CD8-positive, alpha-beta T cell (primary cell): ENCODE measurements at regions of chr6 and their contacts with region 1.

Region 1: DNA sequence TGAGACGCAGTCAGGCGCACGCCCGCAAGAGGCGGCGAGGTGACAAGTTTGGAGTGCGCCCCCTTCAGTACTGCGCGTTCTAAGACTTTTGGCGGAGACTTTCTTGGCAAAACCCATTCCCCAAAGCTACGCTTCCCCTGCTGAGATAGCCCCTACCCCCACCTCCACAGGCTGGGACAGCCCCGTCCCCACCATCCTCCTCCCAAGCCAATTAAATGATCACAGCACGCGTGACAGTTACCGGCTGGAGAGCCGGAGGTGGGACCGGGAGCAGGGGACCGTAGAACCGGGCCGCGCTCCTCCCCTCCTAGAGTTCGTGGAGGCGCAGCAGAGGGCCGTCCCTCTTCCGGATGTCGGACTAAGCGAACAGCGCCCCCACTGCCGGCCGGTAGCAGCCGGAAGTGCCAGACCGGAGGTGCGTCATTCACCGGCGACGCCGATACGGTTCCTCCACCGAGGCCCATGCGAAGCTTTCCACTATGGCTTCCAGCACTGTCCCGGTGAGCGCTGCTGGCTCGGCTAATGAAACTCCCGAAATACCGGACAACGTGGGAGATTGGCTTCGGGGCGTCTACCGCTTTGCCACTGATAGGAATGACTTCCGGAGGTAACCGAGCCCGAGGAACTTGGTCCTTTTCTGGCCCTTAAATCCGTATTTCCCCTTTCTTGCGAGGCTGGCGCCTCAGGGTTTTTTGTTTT is at the start of gene TOMM6:
- DNase-seq: peak; percentile 90 to 97 (median 96)
- ATAC-seq: peak; percentile 78
- H3K4me3 ChIP-seq: peak within 1 kb of the TSS; percentile 80 to 96
- H3K4me3 Mint-ChIP-seq: peak within 1 kb of the TSS; percentile 97
- H3K27ac ChIP-seq: peak within 1 kb of the TSS; percentile 89 to 94
- H3K27ac Mint-ChIP-seq: peak within 1 kb of the TSS; percentile 99
- H3K4me1 ChIP-seq: peaks cover 6% of the 10 kb centered on the region
- H3K4me1 Mint-ChIP-seq: peaks cover 15% of the 10 kb centered on the region
- H3K27me3 ChIP-seq: no peaks in the 10 kb centered on the region
- H3K27me3 Mint-ChIP-seq: no peaks in the 10 kb centered on the region
- CTCF ChIP-seq: peak; percentile 78
- total RNA-seq, gene TOMM6: 94.3 to 101 TPM

Region 2: GRCh38 chr6:41408576-41408975 is 378.8 kb before region 1 on chr6:
- CTCF ChIA-PET with region 1: no interaction called
- POLR2A ChIA-PET with region 1: no interaction called
- intact Hi-C with region 1: no loop called
- DNase-seq: no peak
- ATAC-seq: no peak
- H3K4me3 ChIP-seq: no peak overlapping the region
- H3K4me3 Mint-ChIP-seq: no peak overlapping the region
- H3K27ac ChIP-seq: no peak overlapping the region
- H3K27ac Mint-ChIP-seq: no peak overlapping the region
- H3K4me1 ChIP-seq: no peaks in the 10 kb centered on the region
- H3K4me1 Mint-ChIP-seq: no peaks in the 10 kb centered on the region
- H3K27me3 ChIP-seq: no peaks in the 10 kb centered on the region
- H3K27me3 Mint-ChIP-seq: peaks cover 7% of the 10 kb centered on the region
- CTCF ChIP-seq: no peak

Region 3: DNA sequence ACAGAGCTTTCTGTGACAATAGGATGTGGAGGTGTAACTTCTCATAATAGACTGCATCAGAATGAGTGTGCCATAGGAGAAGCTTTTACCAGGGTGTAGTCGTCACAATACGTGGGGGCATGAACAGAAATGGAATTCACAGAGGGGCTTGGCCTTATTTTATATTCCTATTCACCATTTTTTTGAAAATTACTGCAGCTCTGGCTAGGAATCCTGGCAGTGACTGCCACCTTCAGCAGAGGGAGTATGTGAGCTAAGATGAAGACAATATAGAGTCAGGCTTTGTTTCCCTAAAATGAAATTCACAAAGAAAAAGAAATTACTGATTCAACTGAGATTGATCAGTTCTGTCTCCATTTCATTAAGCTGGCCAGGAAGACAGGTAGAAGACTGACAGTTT is 14.0 kb after region 1 on chr6:
- CTCF ChIA-PET with region 1: interaction called, 11 read pairs
- POLR2A ChIA-PET with region 1: interaction called, 3 read pairs
- intact Hi-C with region 1: no loop called
- DNase-seq: no peak
- ATAC-seq: no peak
- H3K4me3 ChIP-seq: no peak overlapping the region
- H3K4me3 Mint-ChIP-seq: no peak overlapping the region
- H3K27ac ChIP-seq: no peak overlapping the region
- H3K27ac Mint-ChIP-seq: no peak overlapping the region
- H3K4me1 ChIP-seq: no peaks in the 10 kb centered on the region
- H3K4me1 Mint-ChIP-seq: no peaks in the 10 kb centered on the region
- H3K27me3 ChIP-seq: no peaks in the 10 kb centered on the region
- H3K27me3 Mint-ChIP-seq: no peaks in the 10 kb centered on the region
- CTCF ChIP-seq: no peak

Region 4: DNA sequence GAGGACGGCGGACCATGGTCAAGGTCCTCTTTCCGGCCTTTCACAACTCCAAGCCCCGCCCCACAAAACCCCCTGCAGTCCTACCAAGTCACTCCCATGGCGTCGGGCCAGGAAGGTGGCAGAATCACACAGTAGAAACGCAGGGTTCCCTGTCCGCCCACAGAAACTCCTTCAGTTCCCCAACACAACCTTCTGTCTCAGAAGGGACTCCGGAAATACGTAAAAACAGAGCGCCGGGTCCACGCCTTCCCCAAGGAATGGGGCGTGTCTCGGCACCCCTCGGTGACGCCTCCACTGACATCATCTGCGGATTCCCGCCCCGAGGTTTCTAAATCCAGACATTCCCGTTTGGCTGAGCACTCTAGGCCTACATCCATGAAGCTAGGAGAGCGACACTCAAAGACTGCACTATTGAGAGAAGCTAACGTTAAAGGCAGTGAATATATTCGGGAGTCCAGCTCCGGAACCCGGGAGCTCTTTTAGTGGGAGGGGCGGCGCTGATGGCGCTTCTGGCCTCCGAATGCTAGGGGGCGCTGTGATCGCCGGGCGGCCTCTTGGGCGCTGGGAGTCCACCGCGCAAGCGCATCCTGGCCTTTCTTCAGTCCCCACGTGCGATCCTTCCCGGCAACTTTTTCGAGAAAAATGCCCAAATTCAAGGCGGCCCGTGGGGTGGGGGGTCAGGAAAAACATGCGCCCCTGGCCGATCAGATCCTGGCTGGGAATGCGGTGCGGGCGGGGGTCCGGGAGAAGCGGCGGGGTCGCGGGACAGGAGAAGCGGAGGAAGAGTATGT is 133.7 kb after region 1 on chr6 and contains the starts of genes BYSL and MED20:
- CTCF ChIA-PET with region 1: interaction called, 30 read pairs
- POLR2A ChIA-PET with region 1: interaction called, 18 read pairs
- intact Hi-C with region 1: loop called (anchors 1 kb)
- DNase-seq: peak; percentile 86 to 98 (median 94)
- ATAC-seq: peak; percentile 92
- H3K4me3 ChIP-seq: peak within 1 kb of the TSS; percentile 96 to 97
- H3K4me3 Mint-ChIP-seq: peak within 1 kb of the TSS; percentile 100
- H3K27ac ChIP-seq: peak within 1 kb of the TSS; percentile 83 to 99
- H3K27ac Mint-ChIP-seq: peak within 1 kb of the TSS; percentile 100
- H3K4me1 ChIP-seq: peaks cover 32% of the 10 kb centered on the region
- H3K4me1 Mint-ChIP-seq: peaks cover 53% of the 10 kb centered on the region
- H3K27me3 ChIP-seq: no peaks in the 10 kb centered on the region
- H3K27me3 Mint-ChIP-seq: no peaks in the 10 kb centered on the region
- CTCF ChIP-seq: peak; percentile 97
- total RNA-seq, gene BYSL: 3.2 to 6.2 TPM
- total RNA-seq, gene MED20: 1.8 TPM

Region 5: DNA sequence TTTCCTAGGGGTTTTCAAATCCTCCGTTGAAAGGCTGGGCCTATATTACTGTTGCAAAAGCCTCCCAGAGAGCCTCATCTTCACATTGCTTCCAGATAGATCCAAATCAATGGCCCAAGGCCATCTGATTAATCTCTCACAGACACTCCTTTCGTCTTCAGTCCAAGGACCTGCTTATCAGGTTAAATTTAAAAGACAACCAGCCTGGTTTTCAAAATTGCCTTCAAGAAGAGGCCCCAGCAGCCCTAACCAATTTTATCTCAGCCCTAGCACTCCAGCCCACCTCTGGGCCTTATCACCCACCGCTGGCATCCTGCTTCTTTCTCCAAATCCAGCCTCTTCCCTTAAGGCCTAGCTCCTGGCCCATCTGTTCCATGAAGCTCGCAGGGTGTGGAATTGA is 169.7 kb after region 1 on chr6:
- CTCF ChIA-PET with region 1: no interaction called
- POLR2A ChIA-PET with region 1: no interaction called
- intact Hi-C with region 1: no loop called
- DNase-seq: no peak
- ATAC-seq: no peak
- H3K4me3 ChIP-seq: no peak overlapping the region
- H3K4me3 Mint-ChIP-seq: no peak overlapping the region
- H3K27ac ChIP-seq: peak overlapping the region in 1 of 2 experiments; percentile 2
- H3K27ac Mint-ChIP-seq: peak overlapping the region; percentile 83
- H3K4me1 ChIP-seq: peaks cover 38% of the 10 kb centered on the region
- H3K4me1 Mint-ChIP-seq: peaks cover 71% of the 10 kb centered on the region
- H3K27me3 ChIP-seq: no peaks in the 10 kb centered on the region
- H3K27me3 Mint-ChIP-seq: no peaks in the 10 kb centered on the region
- CTCF ChIP-seq: no peak

Region 6: DNA sequence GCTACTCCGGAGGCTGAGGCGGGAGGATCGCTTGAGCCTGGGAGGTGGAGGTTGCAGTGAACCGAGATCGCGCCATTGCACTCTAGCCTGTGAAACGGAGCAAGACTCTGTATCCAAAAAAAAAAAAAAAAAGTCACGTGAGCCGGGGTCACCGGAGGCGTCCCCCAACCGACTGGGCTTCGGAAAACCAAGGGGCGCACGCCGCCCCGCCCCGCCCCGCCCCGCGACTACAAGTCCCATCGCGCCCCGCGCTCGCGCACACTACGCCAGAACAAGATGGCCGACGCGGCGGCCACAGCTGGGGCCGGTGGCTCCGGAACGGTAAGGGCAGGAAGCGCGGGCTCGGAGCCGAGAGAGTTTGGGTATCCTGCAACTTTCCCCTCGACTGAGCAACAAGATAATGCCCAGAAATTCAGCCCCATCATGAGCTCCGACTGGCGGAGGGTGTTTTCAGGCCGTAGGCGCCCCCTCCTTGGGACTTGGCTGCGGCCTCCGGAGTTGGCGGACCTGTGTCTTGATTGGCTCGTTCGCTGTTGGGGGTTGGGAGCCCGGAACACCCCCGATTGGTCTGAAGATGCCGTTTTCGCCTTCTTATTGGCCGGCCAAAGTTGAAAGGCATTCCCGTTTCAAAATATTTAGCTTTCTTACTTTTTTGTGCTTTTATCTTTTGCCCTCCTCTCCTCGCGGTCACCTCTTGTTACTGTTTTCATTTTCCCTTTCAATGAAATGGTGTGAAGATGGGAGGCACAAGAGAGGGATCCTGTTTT is 263.1 kb after region 1 on chr6 and contains the start of gene TAF8:
- CTCF ChIA-PET with region 1: interaction called, 153 read pairs
- POLR2A ChIA-PET with region 1: interaction called, 48 read pairs
- intact Hi-C with region 1: loop called (anchors 1 kb)
- DNase-seq: peak; percentile 72 to 94 (median 89)
- ATAC-seq: peak; percentile 57
- H3K4me3 ChIP-seq: peak within 1 kb of the TSS; percentile 98 to 99
- H3K4me3 Mint-ChIP-seq: peak within 1 kb of the TSS; percentile 95
- H3K27ac ChIP-seq: peak within 1 kb of the TSS; percentile 80 to 89
- H3K27ac Mint-ChIP-seq: peak within 1 kb of the TSS; percentile 97
- H3K4me1 ChIP-seq: peaks cover 39% of the 10 kb centered on the region
- H3K4me1 Mint-ChIP-seq: peaks cover 66% of the 10 kb centered on the region
- H3K27me3 ChIP-seq: no peaks in the 10 kb centered on the region
- H3K27me3 Mint-ChIP-seq: no peaks in the 10 kb centered on the region
- CTCF ChIP-seq: no peak
- total RNA-seq, gene TAF8: 24.6 to 33.3 TPM

Region 7: GRCh38 chr6:42879372-42880239 is 1092.2 kb after region 1 on chr6 and contains the start of gene RPL7L1:
- CTCF ChIA-PET with region 1: no interaction called
- POLR2A ChIA-PET with region 1: no interaction called
- intact Hi-C with region 1: loop called in 1 of 2 experiments (anchors 5 kb)
- DNase-seq: peak; percentile 69 to 93 (median 82)
- ATAC-seq: peak; percentile 92
- H3K4me3 ChIP-seq: peak within 1 kb of the TSS; percentile 71 to 83
- H3K4me3 Mint-ChIP-seq: peak within 1 kb of the TSS; percentile 98
- H3K27ac ChIP-seq: peak within 1 kb of the TSS; percentile 92 to 94
- H3K27ac Mint-ChIP-seq: peak within 1 kb of the TSS; percentile 99
- H3K4me1 ChIP-seq: peaks cover 19% of the 10 kb centered on the region
- H3K4me1 Mint-ChIP-seq: peaks cover 27% of the 10 kb centered on the region
- H3K27me3 ChIP-seq: no peaks in the 10 kb centered on the region
- H3K27me3 Mint-ChIP-seq: no peaks in the 10 kb centered on the region
- CTCF ChIP-seq: no peak
- total RNA-seq, gene RPL7L1: 67.9 to 68.6 TPM

Region 8: GRCh38 chr6:43427406-43428111 is 1640.2 kb after region 1 on chr6 and contains the start of gene ABCC10:
- CTCF ChIA-PET with region 1: no interaction called
- POLR2A ChIA-PET with region 1: no interaction called
- intact Hi-C with region 1: loop called in 1 of 2 experiments (anchors 2 kb)
- DNase-seq: peak; percentile 89 to 98 (median 94)
- ATAC-seq: peak; percentile 94
- H3K4me3 ChIP-seq: peak within 1 kb of the TSS; percentile 78 to 91
- H3K4me3 Mint-ChIP-seq: peak within 1 kb of the TSS; percentile 94
- H3K27ac ChIP-seq: peak within 1 kb of the TSS; percentile 80 to 84
- H3K27ac Mint-ChIP-seq: peak within 1 kb of the TSS; percentile 98
- H3K4me1 ChIP-seq: peaks cover 11% of the 10 kb centered on the region
- H3K4me1 Mint-ChIP-seq: peaks cover 30% of the 10 kb centered on the region
- H3K27me3 ChIP-seq: no peaks in the 10 kb centered on the region
- H3K27me3 Mint-ChIP-seq: no peaks in the 10 kb centered on the region
- CTCF ChIP-seq: no peak
- total RNA-seq, gene ABCC10: 39.7 to 45.5 TPM